Body of pancreas (tissue), 4 donors: ENCODE measurements at regions of chr14 and their contacts with region 1.

Region 1: DNA sequence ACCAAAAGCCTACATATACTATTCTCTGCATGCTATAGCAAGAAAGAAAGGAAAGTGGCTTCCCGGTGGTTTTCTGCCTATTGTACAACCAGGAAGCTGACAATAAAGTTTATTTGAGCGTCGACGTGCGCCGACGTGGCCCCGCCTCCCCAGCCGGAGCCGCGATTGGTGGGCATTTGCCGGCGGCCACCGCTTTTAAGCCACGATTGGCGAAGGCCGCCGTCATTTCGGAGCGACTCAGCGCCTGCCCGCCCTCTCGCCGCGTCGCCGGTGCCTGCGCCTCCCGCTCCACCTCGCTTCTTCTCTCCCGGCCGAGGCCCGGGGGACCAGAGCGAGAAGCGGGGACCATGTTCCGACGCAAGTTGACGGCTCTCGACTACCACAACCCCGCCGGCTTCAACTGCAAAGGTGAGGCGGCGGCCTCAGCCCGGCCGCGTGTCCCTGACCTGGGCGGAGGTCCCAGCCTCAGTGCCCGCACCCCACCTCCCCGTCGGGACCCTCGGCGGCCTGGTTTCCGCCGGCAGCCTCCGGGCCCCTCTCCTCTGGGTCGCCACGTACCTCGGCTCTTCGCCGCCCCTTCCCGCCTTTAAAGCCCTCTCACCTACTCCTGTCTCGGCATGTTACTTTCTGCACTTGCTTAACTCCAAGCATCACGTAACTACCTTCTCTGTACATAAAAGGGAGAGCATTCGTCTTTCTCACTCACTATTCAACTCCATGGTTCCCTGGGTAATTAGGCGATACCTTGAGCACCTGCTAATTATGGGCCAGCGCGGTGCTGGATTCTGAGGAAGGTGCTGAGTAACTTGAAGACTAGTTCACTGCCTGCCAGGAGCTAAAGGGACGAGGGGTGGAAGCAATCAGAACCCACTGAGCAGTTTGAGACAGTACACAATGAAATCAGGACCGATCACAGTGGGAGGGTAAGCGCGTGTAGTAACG is at the start of gene RTRAF:
- DNase-seq: peak; percentile 94 to 95 (median 94)
- ATAC-seq: peak; percentile 100
- H3K4me3 ChIP-seq: peak within 1 kb of the TSS; percentile 57 to 84
- H3K27ac ChIP-seq: peak within 1 kb of the TSS; percentile 76 to 90 (median 85)
- H3K4me1 ChIP-seq: peaks cover 19% of the 10 kb centered on the region
- H3K27me3 ChIP-seq: no peaks in the 10 kb centered on the region
- CTCF ChIP-seq: no peak
- POLR2A ChIP-seq: peak; percentile 79 to 92 (median 91)
- total RNA-seq, gene RTRAF: 15.2 to 40.7 TPM

Region 2: DNA sequence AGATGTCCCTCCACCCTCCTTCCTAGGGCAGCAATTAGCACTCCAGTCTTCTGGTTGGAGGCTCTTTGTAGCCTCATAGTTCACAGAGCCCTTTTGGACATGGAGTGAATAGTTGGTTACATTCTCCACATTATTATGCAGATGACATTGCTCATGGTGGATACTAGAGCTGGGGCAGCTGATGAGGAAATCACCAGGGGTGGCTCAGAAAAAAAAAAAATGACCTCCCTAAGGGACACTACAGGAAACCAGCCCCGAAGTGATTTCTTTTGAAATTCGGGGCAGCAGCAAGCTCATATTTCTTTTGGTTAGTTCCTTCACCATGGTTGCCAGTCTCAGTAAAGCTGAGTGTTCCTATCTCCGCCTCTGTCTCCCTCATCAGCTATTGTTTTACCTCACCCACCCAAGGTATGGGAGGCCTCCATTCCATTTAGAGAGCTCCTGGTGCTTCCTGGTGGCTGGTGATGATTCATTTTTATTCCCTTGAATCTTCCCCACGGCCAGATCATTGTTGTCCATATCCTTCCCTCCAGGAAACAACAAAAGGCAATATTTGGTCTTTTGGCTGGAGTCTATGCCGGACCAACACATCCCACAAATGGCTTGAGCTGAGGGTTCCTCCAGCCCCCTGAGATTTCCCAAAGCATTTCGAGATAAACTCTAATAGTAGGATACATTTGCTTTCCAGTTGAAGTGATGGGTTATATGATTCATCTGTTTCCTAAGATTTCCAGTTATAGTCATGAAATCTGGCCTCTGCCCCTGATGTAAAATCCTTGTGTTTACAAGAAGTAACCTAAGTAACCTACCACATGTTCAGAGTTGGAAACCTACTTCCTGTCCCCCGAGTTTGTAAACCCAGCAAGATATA is 135.5 kb after region 1 on chr14:
- intact Hi-C with region 1: loop called (anchors 10 kb)
- DNase-seq: peak in 1 of 4 donors; percentile 3
- ATAC-seq: peak; percentile 47
- H3K4me3 ChIP-seq: no peak overlapping the region
- H3K27ac ChIP-seq: peak overlapping the region in 2 of 4 donors; percentile 15 to 36
- H3K4me1 ChIP-seq: no peaks in the 10 kb centered on the region
- H3K27me3 ChIP-seq: no peaks in the 10 kb centered on the region
- CTCF ChIP-seq: no peak
- POLR2A ChIP-seq: no peak